Dorsolateral prefrontal cortex (tissue), 120 donors: ENCODE measurements at regions of chr15 and their contacts with region 1.

Region 1: GRCh38 chr15:49155110-49155833 is at the start of gene COPS2:
- DNase-seq: peak; percentile 89 to 98 (median 95)
- H3K4me3 ChIP-seq: peak within 1 kb of the TSS; percentile 71 to 100 (median 96)
- H3K27ac ChIP-seq: peak within 1 kb of the TSS; percentile 7 to 97 (median 90)
- H3K27me3 ChIP-seq: no peaks in the 10 kb centered on the region
- CTCF ChIP-seq: peak in 51 of 56 donors; percentile 17 to 72 (median 44)
- total RNA-seq, gene COPS2: 32.1 to 97.9 (median 73.1) TPM

Region 2: DNA sequence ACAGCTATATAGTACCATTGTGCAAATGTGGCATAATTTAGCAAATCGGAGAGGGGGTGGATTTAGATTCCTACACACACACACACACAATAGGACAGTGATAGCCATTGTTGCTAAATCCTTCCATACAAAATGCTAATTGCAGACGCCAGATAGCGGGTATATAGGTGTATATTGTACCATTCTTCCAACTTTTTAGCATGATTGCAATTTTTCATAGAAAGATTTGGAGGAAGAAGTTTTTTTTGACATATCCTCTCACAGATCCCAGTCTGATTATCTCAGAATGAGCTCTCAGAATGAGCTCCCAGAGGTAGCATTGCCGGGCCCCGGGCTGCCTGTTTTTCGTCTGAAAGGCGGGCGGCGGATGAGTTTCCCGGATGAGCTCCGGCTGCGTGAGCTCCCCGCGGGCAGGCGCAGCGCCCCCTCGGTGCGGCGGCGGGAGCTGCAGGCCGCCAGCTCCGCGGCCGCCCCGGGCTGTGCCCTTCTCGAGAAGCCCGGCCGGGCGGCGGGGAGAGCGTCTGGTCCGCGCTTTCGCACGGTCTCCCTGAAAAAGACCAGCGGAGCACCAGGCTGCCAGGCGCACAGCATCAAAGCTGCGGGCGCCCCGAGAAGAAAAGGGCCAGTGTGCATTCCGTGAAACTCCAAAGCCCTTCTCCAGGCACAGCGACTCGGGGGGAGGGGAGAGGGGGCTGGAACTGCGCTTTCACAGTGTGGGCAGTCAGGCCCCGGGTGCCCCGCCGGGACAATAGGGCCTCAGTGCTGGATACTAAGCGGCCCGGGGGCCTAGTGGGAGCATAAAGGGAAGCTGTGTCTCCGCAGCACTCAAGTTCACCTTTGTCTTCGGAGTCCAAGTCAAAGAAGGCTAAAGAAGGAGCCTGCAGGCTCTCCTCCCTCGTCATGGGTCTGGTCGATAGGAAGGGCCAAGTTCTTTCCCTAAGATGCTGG is 179.5 kb before region 1 on chr15:
- intact Hi-C with region 1: loop called in 1 of 2 experiments (anchors 1 kb)
- DNase-seq: peak; percentile 82 to 92 (median 90)
- H3K4me3 ChIP-seq: peak overlapping the region; percentile 43 to 74 (median 59)
- H3K27ac ChIP-seq: peak overlapping the region; percentile 75 to 99 (median 95)
- H3K27me3 ChIP-seq: no peaks in the 10 kb centered on the region
- CTCF ChIP-seq: peak; percentile 74 to 99 (median 88)

Region 3: DNA sequence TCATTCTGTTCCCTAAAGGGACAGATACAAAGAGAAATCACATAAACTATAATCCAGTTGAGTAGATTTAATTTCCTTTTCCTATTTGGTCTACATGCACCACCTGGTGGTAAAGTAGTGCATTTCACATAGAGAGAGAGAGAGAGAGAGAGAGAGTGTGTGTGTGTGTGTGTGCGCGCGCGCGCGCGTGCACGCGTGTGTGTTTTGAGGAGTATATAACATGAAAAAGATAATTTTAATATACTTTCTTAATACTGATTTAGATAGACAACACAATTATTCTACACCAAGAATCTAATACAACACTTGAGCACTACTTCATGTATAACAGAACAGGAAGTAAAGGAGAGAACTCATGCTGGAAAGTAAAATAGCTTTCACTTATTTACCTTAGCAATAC is 266.7 kb after region 1 on chr15:
- intact Hi-C with region 1: no loop called
- DNase-seq: peak in 2 of 10 donors; percentile 27 to 29
- H3K4me3 ChIP-seq: peak overlapping the region in 39 of 59 donors; percentile 1 to 59 (median 29)
- H3K27ac ChIP-seq: peak overlapping the region in 1 of 59 donors; percentile 24
- H3K27me3 ChIP-seq: peaks cover 0 to 4% (median 0%) of the 10 kb centered on the region in 45 donors
- CTCF ChIP-seq: peak; percentile 35 to 93 (median 74)